Activated CD4-positive, alpha-beta T cell treated with anti-CD3 and anti-CD28 coated beads for 36 hours (primary cell): ENCODE measurements at regions of chr2 and their contacts with region 1.

Region 1: GRCh38 chr2:159921752-159922404 is 123.9 kb upstream of the CD302 start:
- DNase-seq: peak; percentile 91
- ATAC-seq: peak; percentile 67
- H3K4me3 Mint-ChIP-seq: peak overlapping the region; percentile 1
- H3K27ac Mint-ChIP-seq: peak overlapping the region; percentile 58
- H3K4me1 Mint-ChIP-seq: peaks cover 41% of the 10 kb centered on the region
- H3K27me3 Mint-ChIP-seq: peaks cover 20% of the 10 kb centered on the region

Region 2: DNA sequence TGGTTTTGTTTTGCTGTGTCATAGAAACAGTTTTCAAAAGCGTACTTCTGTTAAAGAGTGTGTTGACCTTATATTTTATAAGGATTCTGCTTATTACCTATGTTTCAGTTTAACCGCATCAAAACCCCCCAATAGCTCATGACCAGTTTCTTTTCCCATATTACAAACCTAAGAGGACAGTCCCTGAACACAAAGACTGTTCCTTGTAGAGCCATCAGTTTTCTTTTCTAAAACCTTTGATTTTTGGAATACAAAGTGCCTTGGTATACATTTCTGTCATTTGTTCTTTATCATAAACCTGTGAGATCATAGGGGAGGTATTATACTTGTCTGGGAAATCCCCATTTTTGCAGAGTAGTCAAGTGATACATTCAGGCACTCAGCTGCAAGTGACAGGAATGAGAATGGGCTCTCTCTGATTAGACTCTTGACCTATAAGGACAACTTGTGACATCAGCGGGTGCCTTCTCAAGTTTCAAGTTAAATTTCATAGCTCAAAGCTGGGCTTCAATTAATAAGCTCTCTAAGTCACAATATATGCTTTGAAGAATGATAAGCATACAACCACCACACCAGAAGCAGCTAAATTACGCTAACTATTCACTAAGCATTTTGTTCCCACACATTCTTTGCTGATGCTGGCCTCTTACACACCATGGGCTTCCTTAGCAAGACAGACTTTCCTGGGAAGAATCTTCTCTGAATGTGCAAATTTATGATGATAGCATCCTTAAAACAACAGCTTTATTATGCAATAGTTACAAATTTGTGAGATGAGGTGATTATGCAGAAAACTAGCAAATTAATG is 26.4 kb before region 1 on chr2:
- CTCF ChIA-PET with region 1: interaction called, 25 read pairs
- POLR2A ChIA-PET with region 1: interaction called, 4 read pairs
- intact Hi-C with region 1: loop called in 1 of 2 experiments (anchors 1 kb)
- DNase-seq: peak; percentile 51
- ATAC-seq: peak; percentile 86
- H3K4me3 Mint-ChIP-seq: peak overlapping the region; percentile 46
- H3K27ac Mint-ChIP-seq: peak overlapping the region; percentile 82
- H3K4me1 Mint-ChIP-seq: peaks cover 97% of the 10 kb centered on the region
- H3K27me3 Mint-ChIP-seq: no peaks in the 10 kb centered on the region